Posterior cingulate gyrus (tissue), 11 donors: ENCODE measurements at regions of chr9 and their contacts with region 1.

Region 1: GRCh38 chr9:76403352-76403751 is 9.1 kb upstream of the RFK start:
- DNase-seq: no peak

Region 2: GRCh38 chr9:76336027-76336426 is 67.3 kb before region 1 on chr9:
- intact Hi-C with region 1: no loop called
- DNase-seq: no peak

Region 3: DNA sequence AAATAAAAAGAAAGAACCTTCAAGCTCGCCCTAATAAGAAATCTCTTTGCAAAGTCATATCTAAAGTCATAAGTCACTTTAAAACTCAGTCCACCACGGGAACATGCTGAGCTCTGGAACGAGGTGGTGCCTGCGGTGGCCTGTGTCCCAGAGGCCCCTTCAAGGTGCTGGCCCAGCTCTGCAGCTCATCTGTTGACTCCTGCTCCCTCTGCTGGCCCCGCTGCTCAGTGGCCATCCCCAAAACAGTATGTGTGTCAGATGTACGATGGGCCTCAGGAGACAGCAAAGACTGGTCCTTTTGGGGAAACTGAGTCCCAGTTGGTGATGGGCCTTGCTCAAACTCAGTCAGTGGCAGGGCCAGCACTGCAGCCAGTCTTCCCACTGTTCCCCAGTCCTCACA is 593.3 kb after region 1 on chr9:
- intact Hi-C with region 1: loop called (anchors 10 kb)
- DNase-seq: peak in 8 of 10 donors; percentile 25 to 92 (median 60)